ENCODE measurements at regions of chr1 and their contacts with region 1.

Region 1: DNA sequence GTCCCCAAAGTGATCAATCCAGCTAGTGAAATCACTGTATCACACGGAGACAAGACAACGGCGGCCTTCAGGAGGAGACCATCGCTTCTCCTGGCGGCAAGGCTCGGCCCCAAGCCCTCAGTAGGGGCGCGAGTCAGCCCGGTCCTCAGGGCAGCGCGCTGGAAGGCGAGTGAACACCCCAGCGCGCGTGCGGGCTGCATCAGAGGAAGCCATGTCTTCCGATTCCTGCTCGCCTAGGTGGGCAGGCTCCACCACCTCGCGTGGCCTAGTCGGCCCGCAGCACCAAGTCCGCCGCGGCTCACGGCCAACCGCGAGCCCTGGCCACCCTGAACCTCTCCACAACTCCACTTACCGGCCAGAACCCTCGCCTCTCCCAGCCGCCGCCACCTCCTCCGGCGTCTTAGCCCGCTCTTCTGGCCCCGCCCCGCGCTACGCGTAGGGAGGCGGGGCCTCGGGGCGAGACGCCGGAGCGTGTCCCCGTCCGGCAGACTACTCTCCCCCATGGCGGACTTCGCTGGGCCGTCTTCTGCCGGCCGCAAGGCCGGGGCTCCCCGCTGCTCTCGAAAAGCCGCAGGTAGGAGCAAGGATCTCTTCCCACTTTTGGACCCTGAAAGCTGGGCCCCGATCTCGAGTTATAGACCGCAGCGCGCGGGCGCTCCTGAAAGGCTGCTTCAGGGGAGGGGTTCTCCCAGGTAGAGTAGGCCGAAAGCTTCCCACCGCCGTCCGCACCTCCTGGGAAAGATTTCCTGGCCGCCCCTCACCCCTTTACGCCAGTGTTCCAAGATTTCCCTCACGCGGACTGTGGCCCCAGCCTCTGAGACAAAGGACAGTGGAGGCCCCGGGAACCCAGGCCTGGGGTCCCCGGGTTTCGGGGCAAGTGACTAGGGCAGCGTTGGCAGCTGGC is at the starts of genes GLMN and RPAP2:
- DNase-seq: peak; percentile 59 to 97 (median 77)

Region 2: DNA sequence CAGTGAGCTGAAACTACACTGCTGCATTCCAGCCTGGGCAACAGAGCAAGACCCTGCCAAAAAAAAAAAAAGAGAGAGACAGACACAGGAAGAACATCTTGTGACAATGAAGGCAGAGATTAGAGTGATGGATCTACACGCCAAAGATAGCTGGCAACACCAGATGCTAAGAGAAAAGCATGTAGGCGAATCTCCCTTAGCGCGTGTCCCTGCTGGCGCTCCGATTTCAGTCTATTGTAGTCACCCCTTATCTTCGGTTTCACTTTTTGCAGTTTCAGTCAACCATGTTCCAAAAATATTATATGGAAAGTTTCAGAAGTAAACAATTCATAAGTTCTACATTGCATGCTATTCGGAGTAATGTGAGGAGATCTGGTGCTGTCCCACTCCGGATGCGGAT is 361.2 kb before region 1 on chr1:
- intact Hi-C with region 1: loop called (anchors 10 kb)
- DNase-seq: peak in 1 of 10 donors; percentile 6

Region 3: DNA sequence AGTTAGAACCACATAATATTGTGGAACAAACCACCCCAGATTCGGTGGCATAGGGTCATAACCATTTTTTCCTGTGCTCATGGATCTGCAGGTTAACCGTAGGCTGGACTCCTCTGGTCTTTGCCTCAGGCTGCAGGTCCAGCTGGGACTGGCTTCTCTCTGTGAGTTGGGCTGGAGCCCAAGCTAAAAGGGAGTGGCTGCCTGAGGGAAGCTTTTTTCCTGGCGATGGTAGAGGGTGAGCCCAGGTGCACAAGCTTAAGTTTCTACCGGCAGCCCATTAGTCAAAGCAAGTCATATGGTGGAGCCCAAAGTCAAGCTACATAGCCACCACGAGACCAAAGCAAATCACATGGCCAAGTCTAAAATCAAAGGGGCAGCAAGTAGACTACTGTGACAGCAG is 255.2 kb before region 1 on chr1:
- intact Hi-C with region 1: no loop called
- DNase-seq: no peak

Region 4: GRCh38 chr1:92079441-92079840 is 219.4 kb before region 1 on chr1:
- intact Hi-C with region 1: loop called (anchors 10 kb)
- DNase-seq: no peak